Dorsolateral prefrontal cortex (tissue), 120 donors: ENCODE measurements at regions of chr14 and their contacts with region 1.

Region 1: GRCh38 chr14:62117010-62117750 is 355.0 kb downstream of the SNAPC1 start:
- DNase-seq: peak; percentile 49 to 93 (median 84)
- H3K4me3 ChIP-seq: peak overlapping the region; percentile 32 to 79 (median 65)
- H3K27ac ChIP-seq: peak overlapping the region in 32 of 59 donors; percentile 4 to 72 (median 48)
- H3K27me3 ChIP-seq: peaks cover 0 to 39% (median 0%) of the 10 kb centered on the region in 45 donors
- CTCF ChIP-seq: peak in 43 of 56 donors; percentile 20 to 58 (median 37)

Region 2: DNA sequence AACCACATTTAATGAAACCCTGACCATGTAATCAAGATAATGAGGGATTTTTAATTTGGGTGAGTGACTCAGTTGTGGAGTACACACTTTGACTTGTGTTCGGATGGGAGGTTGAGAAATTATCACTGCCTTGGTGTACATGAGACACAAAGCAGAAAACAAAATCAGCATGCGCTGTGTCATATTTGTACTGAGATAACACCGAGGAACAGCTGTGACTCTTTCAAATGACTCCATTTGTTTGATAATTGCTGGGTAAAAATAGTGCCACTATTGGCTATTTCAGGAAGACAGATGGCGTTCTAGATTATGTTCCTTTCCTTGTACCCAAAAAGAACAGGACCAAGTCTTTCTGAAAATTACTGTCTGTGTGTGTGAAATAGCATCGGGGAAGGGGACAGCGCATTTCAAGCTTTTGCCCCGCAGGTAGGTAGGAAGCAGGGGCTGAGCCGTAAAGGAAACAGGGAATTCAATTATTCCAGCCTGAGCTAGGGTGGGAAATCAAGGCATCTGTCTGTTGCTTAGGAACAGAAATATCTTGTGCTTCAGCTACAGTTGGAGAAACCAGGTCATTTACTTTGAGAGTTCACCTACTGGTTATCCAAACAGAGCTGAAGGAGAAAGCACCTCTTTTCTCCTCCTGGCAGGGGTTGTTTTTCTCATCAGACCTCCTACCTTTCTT is 240.7 kb before region 1 on chr14:
- intact Hi-C with region 1: loop called in 1 of 2 experiments (anchors 5 kb)
- DNase-seq: peak in 1 of 10 donors; percentile 38
- H3K4me3 ChIP-seq: peak overlapping the region in 5 of 59 donors; percentile 0 to 32 (median 26)
- H3K27ac ChIP-seq: peak overlapping the region in 53 of 59 donors; percentile 13 to 90 (median 73)
- H3K27me3 ChIP-seq: peaks cover 0 to 15% (median 0%) of the 10 kb centered on the region in 45 donors
- CTCF ChIP-seq: peak in 1 of 56 donors; percentile 13